A549 (cell line): ENCODE measurements at regions of chr9 and their contacts with region 1.

Region 1: DNA sequence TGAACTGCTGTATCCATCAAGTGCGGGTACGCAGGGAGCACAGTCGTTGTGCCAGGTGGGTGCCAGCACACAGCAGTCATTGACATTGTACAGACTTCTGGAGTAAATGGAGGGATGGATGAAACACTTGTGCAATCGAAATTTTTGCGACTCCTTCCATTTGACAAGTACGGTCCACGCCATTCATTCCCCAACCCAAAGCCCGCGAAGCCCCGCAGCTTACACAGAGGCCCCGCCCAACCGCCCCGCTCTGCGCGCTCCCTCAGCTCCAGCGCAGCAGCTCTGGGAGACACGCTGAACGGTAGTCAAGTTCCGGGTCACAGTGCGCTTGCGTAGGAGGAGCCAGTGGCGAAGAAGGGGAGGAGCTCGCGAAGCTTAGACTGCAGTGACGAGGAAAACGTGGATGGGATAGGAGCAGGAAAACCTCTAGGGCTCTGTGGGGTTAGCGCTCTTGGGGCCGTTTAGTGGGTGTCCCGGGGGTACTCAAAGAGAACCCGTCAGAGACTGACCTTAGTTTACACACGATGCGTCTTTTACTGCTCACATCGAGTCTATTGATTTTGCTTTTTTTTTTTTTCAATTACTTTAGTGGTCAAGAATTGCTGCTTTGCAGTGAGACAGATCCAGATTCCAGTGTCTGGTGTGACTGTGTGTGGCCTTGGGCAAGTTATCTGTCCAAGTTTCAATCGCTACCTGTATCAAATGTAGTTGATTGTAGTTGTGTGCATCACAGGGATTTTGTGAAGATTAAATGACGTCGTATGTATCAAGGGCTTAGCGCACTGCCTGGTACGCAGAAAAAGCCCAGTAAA is 15.3 kb upstream of the MSANTD3 start:
- DNase-seq: peak; percentile 93 to 99
- ATAC-seq: peak; percentile 100
- H3K4me3 ChIP-seq: peak overlapping the region; percentile 50
- H3K27ac ChIP-seq: peak overlapping the region; percentile 74 to 86
- H3K4me1 ChIP-seq: 0 out of 3 replicates have a peak, but pooled peaks cover 4% of the 10 kb centered on the region
- CTCF ChIP-seq: no peak
- EP300 ChIP-seq: no peak
- POLR2A ChIP-seq: peak; percentile 89
- RAD21 ChIP-seq: no peak

Region 2: DNA sequence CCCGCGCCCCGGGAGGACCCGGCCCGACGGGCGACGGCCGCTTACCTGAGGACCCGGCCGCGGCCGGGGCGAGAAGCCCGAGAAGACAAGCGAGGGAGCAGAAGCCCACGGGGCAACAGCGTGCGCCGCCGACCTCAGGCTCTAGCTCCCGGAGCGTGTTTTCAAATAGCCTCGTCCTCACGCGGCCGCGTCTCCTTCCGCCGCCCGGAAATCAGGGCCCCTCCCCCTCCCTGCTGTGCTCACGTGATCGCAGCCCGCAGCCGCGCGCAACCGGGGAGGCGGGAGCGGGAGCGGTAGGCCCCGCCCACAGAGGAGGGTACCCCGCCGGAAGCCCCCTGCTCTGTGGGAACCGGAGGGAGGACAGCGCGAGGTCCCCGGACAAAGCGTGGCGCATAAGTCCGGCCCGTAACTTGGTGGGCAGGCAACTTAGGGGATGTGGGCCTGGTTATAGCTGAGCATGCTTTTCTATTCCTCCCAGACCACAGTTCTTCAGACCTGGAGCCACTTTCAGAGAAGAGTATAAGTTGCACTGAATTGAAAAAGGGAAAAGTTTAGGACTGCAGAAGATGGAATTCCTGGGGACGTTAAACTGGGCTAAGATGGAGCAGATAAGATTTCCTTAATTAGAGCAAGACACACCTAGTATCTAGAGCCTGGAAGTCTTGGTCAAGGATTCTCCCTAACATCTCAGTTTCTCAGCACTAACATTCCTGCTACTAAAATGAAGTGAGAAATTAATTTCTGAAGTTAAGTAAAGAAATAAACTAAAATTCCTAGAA is 58.8 kb before region 1 on chr9 and contains the start of gene TEX10:
- CTCF ChIA-PET with region 1: interaction called, 3 read pairs
- POLR2A ChIA-PET with region 1: interaction called, 13 read pairs
- DNase-seq: peak; percentile 86 to 87
- ATAC-seq: peak; percentile 88 to 91
- H3K4me3 ChIP-seq: peak within 1 kb of the TSS; percentile 99
- H3K27ac ChIP-seq: peak within 1 kb of the TSS; percentile 98 to 99
- H3K4me1 ChIP-seq: peaks cover 26% of the 10 kb centered on the region; the same call in 2 of the 3 replicates
- CTCF ChIP-seq: no peak
- EP300 ChIP-seq: no peak
- POLR2A ChIP-seq: peak; percentile 86; the same call in 1 of the 2 replicates
- RAD21 ChIP-seq: 0 out of 5 replicates have a peak, but pooled peaks of 1 of the 2 experiments have one; percentile 14
- polyA plus RNA-seq, gene TEX10: 31.2 and 37.0 TPM in 2 replicates